GM12878 (cell line): ENCODE measurements at regions of chr6 and their contacts with region 1.

Region 1: GRCh38 chr6:149405823-149406765 is 6.0 kb downstream of the SUMO4 start:
- DNase-seq: no peak
- ATAC-seq: no peak
- H3K4me3 ChIP-seq: no peak overlapping the region
- H3K27ac ChIP-seq: no peak overlapping the region
- H3K4me1 ChIP-seq: no peaks in the 10 kb centered on the region
- H3K27me3 ChIP-seq: no peaks in the 10 kb centered on the region
- CTCF ChIP-seq: no peak
- EP300 ChIP-seq: no peak
- POLR2A ChIP-seq: no peak
- RAD21 ChIP-seq: no peak

Region 2: DNA sequence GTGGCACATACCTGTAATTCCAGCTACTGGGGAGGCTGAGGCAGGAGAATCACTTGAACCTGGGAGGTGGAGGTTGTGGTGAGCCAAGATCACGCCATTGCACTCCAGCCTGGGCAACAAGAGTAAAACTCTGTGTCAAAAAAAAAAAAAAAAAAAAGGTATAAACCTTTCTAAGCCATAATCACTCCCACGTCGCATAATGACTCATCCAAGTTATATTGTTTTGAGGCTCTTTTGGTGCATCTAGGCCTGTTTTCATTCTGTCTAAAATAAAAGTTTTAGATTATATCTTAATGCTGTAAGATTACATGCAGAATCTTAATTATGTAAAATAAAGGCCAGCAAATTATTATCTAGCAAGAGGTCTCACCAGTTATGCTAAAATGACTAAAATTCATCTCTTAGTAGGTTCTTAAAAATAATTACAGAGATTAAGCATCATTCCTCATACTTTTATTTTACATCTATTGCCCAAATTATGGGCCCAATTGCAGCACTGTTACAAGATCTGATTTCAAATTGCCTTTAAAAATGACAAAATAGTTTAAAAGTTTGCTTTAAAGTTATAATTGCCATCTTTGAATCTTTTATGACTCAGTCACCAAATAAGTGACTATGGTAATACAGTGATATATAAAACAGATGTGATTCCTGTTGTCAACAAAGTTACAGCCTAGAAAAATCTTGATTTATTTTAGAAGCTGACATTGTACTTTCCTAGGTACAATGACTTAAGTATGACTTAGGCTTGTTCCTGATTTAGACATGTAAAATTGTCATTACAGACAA is 16.4 kb before region 1 on chr6:
- CTCF ChIA-PET with region 1: interaction called, 4 read pairs
- POLR2A ChIA-PET with region 1: no interaction called
- RAD21 ChIA-PET with region 1: interaction called, 5 read pairs
- SMC1A ChIA-PET with region 1: interaction called, 11 read pairs
- in situ Hi-C with region 1: no loop called
- intact Hi-C with region 1: no loop called
- DNase-seq: no peak
- ATAC-seq: no peak
- H3K4me3 ChIP-seq: no peak overlapping the region
- H3K27ac ChIP-seq: no peak overlapping the region
- H3K4me1 ChIP-seq: no peaks in the 10 kb centered on the region
- H3K27me3 ChIP-seq: no peaks in the 10 kb centered on the region
- CTCF ChIP-seq: no peak
- EP300 ChIP-seq: no peak
- POLR2A ChIP-seq: no peak
- RAD21 ChIP-seq: no peak

Region 3: DNA sequence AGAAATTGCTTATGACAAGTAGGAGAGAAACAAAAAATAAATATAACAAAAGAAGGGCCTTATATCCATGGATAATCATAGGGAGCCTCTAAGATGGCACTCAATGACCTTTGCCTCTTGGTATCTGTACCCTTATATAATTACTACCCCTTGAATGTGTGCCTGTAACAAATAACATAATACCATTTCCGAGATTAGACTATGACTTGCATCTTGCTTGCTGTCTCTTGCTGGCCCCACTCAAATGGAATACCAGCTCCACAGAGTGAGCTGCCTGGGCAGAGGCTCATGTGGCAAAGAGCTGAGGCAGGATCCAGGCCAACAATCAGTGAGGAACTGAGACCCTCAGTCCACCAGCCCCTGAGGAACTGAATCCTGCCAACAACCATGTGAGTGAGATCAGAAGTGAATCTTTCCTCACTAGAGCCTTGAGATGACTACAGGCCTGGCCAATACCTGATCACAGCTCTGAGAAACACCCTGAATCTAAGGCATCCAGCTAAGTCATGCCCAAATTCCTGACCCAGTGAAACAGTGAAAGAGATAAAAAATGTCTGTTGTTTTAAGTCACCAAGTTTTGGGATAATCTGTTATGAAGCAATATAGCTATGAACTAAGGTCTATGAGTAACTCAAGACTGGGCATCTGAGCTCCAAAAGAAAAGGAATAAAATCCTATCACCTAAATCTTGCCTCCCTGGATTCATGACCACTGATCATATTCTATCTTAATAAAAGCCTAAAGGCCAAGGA is 236.9 kb after region 1 on chr6:
- CTCF ChIA-PET with region 1: no interaction called
- POLR2A ChIA-PET with region 1: no interaction called
- RAD21 ChIA-PET with region 1: no interaction called
- SMC1A ChIA-PET with region 1: no interaction called
- in situ Hi-C with region 1: no loop called
- intact Hi-C with region 1: no loop called
- DNase-seq: no peak
- ATAC-seq: peak; percentile 76
- H3K4me3 ChIP-seq: no peak overlapping the region
- H3K27ac ChIP-seq: peak overlapping the region; percentile 31; the same call in 1 of the 2 replicates
- H3K4me1 ChIP-seq: peaks cover 6% of the 10 kb centered on the region; the same call in 1 of the 2 replicates
- H3K27me3 ChIP-seq: no peaks in the 10 kb centered on the region
- CTCF ChIP-seq: no peak
- EP300 ChIP-seq: no peak
- POLR2A ChIP-seq: no peak
- RAD21 ChIP-seq: no peak